PC-3 (cell line): ENCODE measurements at regions of chr1 and their contacts with region 1.

Region 1: GRCh38 chr1:114979278-114979891 is 50.2 kb upstream of the TSHB start:
- DNase-seq: peak; percentile 89
- ATAC-seq: peak; percentile 62
- H3K4me3 ChIP-seq: no peak overlapping the region
- H3K27ac ChIP-seq: no peak overlapping the region
- H3K4me1 ChIP-seq: no peaks in the 10 kb centered on the region
- H3K27me3 ChIP-seq: no peaks in the 10 kb centered on the region
- CTCF ChIP-seq: peak; percentile 81

Region 2: GRCh38 chr1:115041654-115042053 is 62.3 kb after region 1 on chr1:
- CTCF ChIA-PET with region 1: no interaction called
- POLR2A ChIA-PET with region 1: no interaction called
- intact Hi-C with region 1: loop called (anchors 1 kb)
- DNase-seq: peak; percentile 63
- ATAC-seq: peak; percentile 85
- H3K4me3 ChIP-seq: no peak overlapping the region
- H3K27ac ChIP-seq: no peak overlapping the region
- H3K4me1 ChIP-seq: no peaks in the 10 kb centered on the region
- H3K27me3 ChIP-seq: peaks cover 5% of the 10 kb centered on the region; the same call in 1 of the 2 replicates
- CTCF ChIP-seq: peak; percentile 74

Region 3: GRCh38 chr1:115052454-115053083 is 73.2 kb after region 1 on chr1:
- CTCF ChIA-PET with region 1: interaction called, 3 read pairs
- POLR2A ChIA-PET with region 1: no interaction called
- intact Hi-C with region 1: loop called (anchors 1 kb)
- DNase-seq: peak; percentile 86
- ATAC-seq: peak; percentile 82
- H3K4me3 ChIP-seq: no peak overlapping the region
- H3K27ac ChIP-seq: no peak overlapping the region
- H3K4me1 ChIP-seq: peaks cover 5% of the 10 kb centered on the region
- H3K27me3 ChIP-seq: no peaks in the 10 kb centered on the region
- CTCF ChIP-seq: peak; percentile 91

Region 4: DNA sequence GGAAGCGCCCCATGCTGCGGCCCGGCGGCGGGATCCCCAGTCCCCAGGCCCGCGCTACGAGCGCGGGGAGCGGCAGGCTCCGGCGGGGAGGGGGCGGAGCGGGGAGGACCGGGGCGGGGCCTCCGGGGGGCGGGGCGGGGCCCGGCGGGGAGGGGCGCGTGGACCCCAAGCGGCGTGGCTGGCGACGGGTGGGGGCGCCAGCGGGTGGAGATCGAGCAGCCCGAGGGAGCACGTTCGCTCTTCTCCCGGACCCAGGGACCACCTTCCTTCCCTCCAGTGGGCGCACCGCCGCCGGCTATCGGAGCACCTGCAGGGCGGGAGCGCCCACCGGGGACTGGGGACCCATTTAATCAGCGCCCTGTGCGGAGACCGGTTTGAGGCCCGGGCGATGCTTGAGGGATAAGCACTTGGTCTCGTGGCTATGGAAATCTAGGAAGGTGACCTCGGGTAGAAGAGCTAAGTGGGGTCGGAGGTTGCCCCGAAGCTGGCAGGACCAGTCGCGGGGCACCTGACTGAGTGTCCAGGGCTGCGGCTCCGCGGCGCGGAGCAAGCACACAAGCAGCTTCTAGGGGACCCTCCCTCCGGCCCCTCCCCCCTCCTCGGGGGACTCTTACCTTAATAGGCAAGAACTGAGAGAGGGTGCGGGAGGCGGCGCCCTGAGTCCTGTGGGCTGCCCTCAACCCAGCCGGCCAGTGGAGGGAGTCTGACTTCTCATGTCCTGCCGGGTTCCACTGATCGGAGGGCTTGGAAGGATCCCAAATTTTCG is 110.2 kb after region 1 on chr1 and contains the start of gene TSPAN2:
- CTCF ChIA-PET with region 1: no interaction called
- POLR2A ChIA-PET with region 1: no interaction called
- intact Hi-C with region 1: no loop called
- DNase-seq: peak; percentile 61
- ATAC-seq: peak; percentile 88
- H3K4me3 ChIP-seq: peak within 1 kb of the TSS; percentile 96
- H3K27ac ChIP-seq: no peak within 1 kb of the TSS
- H3K4me1 ChIP-seq: peaks cover 5% of the 10 kb centered on the region; the same call in 1 of the 2 replicates
- H3K27me3 ChIP-seq: no peaks in the 10 kb centered on the region
- CTCF ChIP-seq: peak; percentile 55
- total RNA-seq, gene TSPAN2: 1.3 and 1.7 TPM in 2 replicates

Region 5: DNA sequence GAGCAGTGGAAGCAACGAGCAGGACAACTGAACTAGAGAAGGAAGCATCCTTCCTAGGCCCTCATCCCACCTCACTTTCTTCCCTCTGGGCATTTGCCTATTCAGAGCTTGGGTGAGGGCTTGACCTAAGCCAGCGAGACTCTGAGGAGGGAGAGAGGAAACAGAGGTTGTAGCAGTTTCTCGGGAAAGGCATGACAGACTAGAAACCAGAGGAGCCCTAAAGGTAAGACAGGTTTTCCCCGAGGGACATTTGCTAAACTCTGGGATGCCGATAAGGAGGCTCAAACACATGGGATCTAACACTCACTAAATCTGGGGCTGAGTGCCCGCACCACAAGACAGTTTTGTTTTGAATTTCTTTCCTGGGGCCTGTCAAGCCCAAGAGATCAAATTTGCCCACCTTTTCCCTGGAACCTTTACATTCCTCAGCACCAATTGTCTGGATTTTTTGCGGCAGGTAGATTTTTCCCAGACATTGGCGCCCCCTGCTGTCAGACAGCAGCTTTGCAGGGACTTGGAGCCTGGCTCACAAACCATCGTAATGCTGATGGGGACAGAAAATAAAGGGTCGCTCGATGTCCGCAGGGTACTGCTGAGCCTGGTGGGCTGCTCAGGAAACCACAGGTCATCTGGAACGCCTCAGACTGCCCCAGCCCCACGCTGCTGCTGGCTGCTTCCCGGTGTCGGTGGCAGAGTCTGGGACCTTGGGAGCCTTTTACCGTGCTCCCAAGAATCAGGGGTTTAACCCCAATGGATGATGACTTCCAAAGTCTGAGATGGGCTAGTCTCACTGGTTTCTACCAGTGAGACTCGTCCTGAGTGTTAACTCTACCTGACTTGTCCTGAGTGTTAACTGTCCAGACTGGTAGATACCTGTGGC is 133.4 kb after region 1 on chr1:
- CTCF ChIA-PET with region 1: no interaction called
- POLR2A ChIA-PET with region 1: no interaction called
- intact Hi-C with region 1: loop called (anchors 1 kb)
- DNase-seq: peak; percentile 65
- ATAC-seq: peak; percentile 35; the same call in 1 of the 2 replicates
- H3K4me3 ChIP-seq: no peak overlapping the region
- H3K27ac ChIP-seq: no peak overlapping the region
- H3K4me1 ChIP-seq: peaks cover 45% of the 10 kb centered on the region
- H3K27me3 ChIP-seq: no peaks in the 10 kb centered on the region
- CTCF ChIP-seq: peak; percentile 96

Region 6: DNA sequence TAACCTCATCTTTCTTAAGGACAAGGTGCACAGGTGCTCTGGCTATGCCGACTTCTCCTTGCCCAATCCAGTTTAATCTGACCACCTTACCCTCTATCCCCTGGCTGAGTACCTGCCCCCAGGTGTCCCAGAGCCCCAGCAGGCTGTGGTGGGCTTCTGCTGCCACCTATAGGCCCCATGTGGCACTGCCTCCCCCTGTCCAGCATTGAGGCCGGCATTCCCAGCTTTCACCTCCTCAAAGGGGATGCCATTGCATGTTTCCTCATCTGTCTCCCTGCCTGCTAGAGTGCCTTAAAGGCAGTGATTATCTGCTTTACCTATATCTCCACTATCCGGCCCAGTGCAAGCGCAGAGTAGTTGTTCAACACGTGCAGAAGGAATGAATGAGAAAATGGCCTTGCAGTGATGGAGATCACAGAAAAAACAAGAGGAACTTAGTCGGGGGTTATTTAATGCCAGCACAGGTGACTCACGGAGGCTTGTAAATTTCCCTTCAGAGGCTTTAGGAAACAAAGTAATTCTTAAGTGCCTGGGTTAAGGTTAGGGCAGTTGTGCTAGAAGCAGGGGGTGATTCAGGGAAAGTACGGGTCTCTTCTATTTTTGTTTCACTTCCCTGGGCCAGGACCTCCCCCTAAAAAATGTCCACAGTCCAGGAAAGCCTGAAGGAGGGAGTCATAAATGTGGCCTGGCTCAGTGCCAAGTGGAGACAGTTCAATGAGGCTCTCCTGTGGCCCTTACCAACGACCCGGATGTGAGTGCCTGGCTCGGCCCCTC is 490.5 kb after region 1 on chr1:
- CTCF ChIA-PET with region 1: no interaction called
- POLR2A ChIA-PET with region 1: no interaction called
- intact Hi-C with region 1: loop called (anchors 10 kb)
- DNase-seq: peak; percentile 86
- ATAC-seq: peak; percentile 76
- H3K4me3 ChIP-seq: peak overlapping the region; percentile 53
- H3K27ac ChIP-seq: peak overlapping the region; percentile 68
- H3K4me1 ChIP-seq: peaks cover 35% of the 10 kb centered on the region
- H3K27me3 ChIP-seq: no peaks in the 10 kb centered on the region
- CTCF ChIP-seq: peak; percentile 98

Region 7: GRCh38 chr1:115595279-115596079 is 616.1 kb after region 1 on chr1:
- CTCF ChIA-PET with region 1: no interaction called
- POLR2A ChIA-PET with region 1: no interaction called
- intact Hi-C with region 1: loop called (anchors 10 kb)
- DNase-seq: peak; percentile 97
- ATAC-seq: peak; percentile 96
- H3K4me3 ChIP-seq: no peak overlapping the region
- H3K27ac ChIP-seq: peak overlapping the region; percentile 1; the same call in 1 of the 2 replicates
- H3K4me1 ChIP-seq: peaks cover 20% of the 10 kb centered on the region
- H3K27me3 ChIP-seq: no peaks in the 10 kb centered on the region
- CTCF ChIP-seq: peak; percentile 96